Common myeloid progenitor, CD34-positive (primary cell): ENCODE measurements at regions of chr1 and their contacts with region 1.

Region 1: GRCh38 chr1:62424411-62424810 is 12.4 kb upstream of the USP1 start:
- DNase-seq: peak in 2 of 3 donors; percentile 6 to 15
- H3K4me3 ChIP-seq: no peak overlapping the region
- H3K27ac ChIP-seq: no peak overlapping the region
- H3K4me1 ChIP-seq: peaks cover 0 to 15% (median 9%) of the 10 kb centered on the region in 4 experiments
- H3K27me3 ChIP-seq: no peaks in the 10 kb centered on the region

Region 2: DNA sequence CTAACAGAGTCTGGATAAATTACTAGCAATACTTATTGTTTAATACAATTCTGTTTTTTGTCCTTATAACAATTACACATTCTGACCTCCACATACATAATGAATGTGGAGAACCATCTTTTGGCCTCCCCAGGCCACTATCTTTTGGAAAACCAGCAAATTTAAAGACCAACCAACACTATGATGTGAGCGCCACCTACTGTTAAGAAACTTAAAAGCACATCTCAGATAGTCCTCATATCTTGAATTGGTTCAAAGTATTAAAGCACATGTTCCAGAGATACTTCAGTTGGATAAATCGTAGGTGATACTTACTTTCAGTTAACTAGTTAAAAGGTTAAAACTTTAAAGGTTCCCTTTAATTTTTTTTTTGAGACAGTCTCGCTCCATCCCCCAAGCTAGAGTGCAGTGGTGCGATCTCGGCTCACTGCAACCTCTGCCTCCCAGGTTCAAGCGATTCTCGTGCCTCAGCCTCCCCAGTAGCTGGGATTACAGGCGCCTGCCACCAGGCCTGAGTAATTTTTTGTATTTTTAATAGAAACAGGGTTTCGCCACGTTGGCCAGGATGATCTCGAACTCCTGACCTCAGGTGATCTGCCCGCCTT is 16.9 kb before region 1 on chr1:
- CTCF ChIA-PET with region 1: interaction called, 14 read pairs
- POLR2A ChIA-PET with region 1: no interaction called
- DNase-seq: peak; percentile 55 to 76 (median 65)
- H3K4me3 ChIP-seq: no peak overlapping the region
- H3K27ac ChIP-seq: no peak overlapping the region
- H3K4me1 ChIP-seq: no peaks in the 10 kb centered on the region
- H3K27me3 ChIP-seq: no peaks in the 10 kb centered on the region

Region 3: DNA sequence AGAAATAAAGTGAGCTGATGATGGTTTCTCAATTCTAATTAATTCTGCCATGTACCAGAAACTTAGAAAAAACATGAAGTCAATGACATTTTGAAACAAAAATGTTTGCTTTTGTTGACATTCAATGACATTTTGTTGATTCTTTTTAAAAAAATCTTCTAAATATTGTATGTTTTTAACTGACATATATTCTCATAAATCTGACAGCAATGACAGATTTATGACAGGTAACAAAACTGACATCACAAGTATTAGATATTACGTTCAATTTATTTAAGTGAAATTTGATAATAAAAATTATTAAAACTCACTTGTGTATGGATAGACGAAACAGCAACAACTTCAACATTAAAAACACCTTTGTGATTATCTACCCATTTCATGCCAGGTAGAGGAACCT is 136.9 kb after region 1 on chr1:
- CTCF ChIA-PET with region 1: no interaction called
- POLR2A ChIA-PET with region 1: no interaction called
- DNase-seq: no peak
- H3K4me3 ChIP-seq: no peak overlapping the region
- H3K27ac ChIP-seq: no peak overlapping the region
- H3K4me1 ChIP-seq: no peaks in the 10 kb centered on the region
- H3K27me3 ChIP-seq: no peaks in the 10 kb centered on the region

Region 4: GRCh38 chr1:63042278-63042677 is 617.9 kb after region 1 on chr1:
- CTCF ChIA-PET with region 1: no interaction called
- POLR2A ChIA-PET with region 1: no interaction called
- DNase-seq: no peak
- H3K4me3 ChIP-seq: no peak overlapping the region
- H3K27ac ChIP-seq: no peak overlapping the region
- H3K4me1 ChIP-seq: no peaks in the 10 kb centered on the region
- H3K27me3 ChIP-seq: peaks cover 0 to 4% (median 0%) of the 10 kb centered on the region in 5 experiments